ENCODE measurements at regions of chr21 and their contacts with region 1.

Region 1: DNA sequence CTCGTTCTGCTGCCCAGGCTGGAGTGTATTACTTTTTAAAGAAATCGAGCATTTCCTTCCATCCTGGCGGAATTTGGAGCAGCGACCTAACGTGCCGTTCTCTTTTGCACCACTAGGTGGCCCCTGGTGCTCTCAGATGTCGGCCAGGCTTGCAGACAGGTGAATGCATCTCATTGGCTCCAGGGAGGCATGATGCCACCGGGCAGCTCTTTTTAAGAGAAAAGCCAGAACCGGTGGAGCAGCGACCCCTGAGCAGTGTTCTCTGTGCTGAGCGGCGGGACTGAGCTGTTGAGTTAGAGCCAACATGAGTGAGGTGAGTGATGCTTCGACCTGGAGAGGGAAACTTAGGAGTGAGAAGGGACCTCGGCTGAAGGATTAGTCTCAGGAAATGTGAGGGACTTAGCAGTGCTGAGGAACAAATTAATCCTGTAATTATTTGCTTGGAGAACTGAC is at the start of gene PCP4:
- DNase-seq: peak; percentile 13 to 36
- ATAC-seq: peak; percentile 30 to 79; a peak in 4 of 6 replicates
- H3K4me3 ChIP-seq: no peak within 1 kb of the TSS
- H3K27ac ChIP-seq: no peak within 1 kb of the TSS
- H3K4me1 ChIP-seq: no peaks in the 10 kb centered on the region
- CTCF ChIP-seq: peak; percentile 48
- EP300 ChIP-seq: no peak
- POLR2A ChIP-seq: no peak
- RAD21 ChIP-seq: peak; percentile 48 to 63; a peak in 4 of 5 replicates
- polyA plus RNA-seq, gene PCP4: not detected in 2 replicates

Region 2: DNA sequence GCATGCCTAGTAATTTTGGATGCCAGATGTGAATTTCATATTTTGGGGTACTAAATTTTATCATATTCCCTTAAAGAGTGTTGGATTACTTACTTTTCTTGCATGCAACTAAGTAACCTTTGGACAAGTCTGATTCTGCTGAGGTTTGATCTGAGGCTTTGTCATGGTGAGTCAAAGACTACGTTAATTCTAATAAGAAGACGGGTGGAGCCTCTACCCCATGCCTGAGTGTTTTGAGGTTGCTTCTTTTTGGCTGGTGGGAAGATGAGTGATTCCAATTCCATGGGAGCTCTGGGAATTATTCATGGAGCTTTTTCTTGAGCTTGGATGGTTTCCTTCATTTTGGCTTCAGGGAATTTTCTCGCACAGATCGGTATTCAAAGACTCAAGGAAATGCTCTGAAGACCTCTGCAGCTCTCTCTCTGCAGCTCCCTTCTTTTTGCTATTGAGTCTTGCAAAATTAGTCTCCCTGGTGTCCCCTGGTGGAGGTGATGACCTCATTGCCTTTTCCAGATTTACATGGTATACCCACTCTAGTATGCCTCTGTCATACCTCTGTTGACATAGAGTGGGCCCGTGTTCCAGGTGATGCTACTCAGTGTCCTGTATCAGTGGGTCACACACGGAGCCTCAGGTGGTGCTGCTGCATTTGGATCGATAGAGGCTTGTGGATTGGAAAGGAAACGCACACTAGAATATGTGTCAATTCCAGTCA is 11.5 kb before region 1 on chr21:
- CTCF ChIA-PET with region 1: interaction called, 11 read pairs
- POLR2A ChIA-PET with region 1: no interaction called
- DNase-seq: no peak
- ATAC-seq: no peak
- H3K4me3 ChIP-seq: no peak overlapping the region
- H3K27ac ChIP-seq: no peak overlapping the region
- H3K4me1 ChIP-seq: no peaks in the 10 kb centered on the region
- CTCF ChIP-seq: no peak
- EP300 ChIP-seq: no peak
- POLR2A ChIP-seq: no peak
- RAD21 ChIP-seq: no peak

Region 3: GRCh38 chr21:40120940-40121575 is 253.8 kb after region 1 on chr21:
- CTCF ChIA-PET with region 1: interaction called, 23 read pairs
- POLR2A ChIA-PET with region 1: no interaction called
- DNase-seq: peak; percentile 4 to 11
- ATAC-seq: no peak
- H3K4me3 ChIP-seq: no peak overlapping the region
- H3K27ac ChIP-seq: no peak overlapping the region
- H3K4me1 ChIP-seq: no peaks in the 10 kb centered on the region
- CTCF ChIP-seq: peak; percentile 58
- EP300 ChIP-seq: no peak
- POLR2A ChIP-seq: no peak
- RAD21 ChIP-seq: peak; percentile 58 to 64